OCI-LY7 (cell line): ENCODE measurements at regions of chr10 and their contacts with region 1.

Region 1: GRCh38 chr10:21989453-21990154 is 13.9 kb downstream of the DNAJC1 start:
- DNase-seq: peak; percentile 60
- H3K4me3 ChIP-seq: no peak overlapping the region
- H3K27ac ChIP-seq: no peak overlapping the region
- H3K4me1 ChIP-seq: no peaks in the 10 kb centered on the region
- CTCF ChIP-seq: peak; percentile 76

Region 2: DNA sequence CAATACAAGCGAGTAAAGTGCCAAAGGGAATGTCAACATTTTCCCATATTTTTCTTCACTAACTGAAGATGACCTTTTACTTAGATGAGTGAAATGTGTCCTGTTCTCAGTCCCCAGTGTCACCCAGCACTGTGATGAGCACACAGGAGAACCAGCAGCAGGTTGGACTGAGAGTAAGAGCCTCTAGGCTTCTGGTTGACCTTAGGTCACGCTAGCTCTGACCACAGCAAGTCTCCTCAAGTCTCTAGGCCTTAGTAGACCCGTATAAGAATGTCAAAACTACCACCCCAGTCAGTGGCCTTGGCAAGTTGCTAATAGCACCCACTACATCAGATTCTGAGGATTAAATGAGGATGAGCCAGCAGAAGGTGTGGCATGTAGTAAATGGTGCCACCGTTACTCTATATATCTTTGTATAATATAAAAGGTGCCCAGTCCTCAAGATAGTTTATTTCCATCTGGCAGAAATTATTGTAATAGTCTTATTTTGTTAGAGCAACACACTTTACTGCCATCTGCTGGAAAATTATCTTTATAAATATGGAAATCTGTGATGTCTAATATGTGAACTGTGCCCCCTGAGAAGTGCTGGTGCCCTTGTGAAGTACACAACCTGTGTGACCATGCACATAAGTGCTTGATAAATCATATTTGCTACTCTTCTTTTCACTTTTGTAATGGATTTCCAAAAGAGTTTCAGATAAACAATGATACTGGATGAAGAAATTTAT is 431.3 kb after region 1 on chr10:
- CTCF ChIA-PET with region 1: no interaction called
- POLR2A ChIA-PET with region 1: no interaction called
- intact Hi-C with region 1: loop called (anchors 5 kb)
- DNase-seq: peak; percentile 36
- H3K4me3 ChIP-seq: no peak overlapping the region
- H3K27ac ChIP-seq: no peak overlapping the region
- H3K4me1 ChIP-seq: no peaks in the 10 kb centered on the region
- CTCF ChIP-seq: peak; percentile 61